Endothelial cell of umbilical vein (primary cell): ENCODE measurements at regions of chr10 and their contacts with region 1.

Region 1: GRCh38 chr10:78756604-78757349 is 312.0 kb upstream of the ZMIZ1 start:
- DNase-seq: peak; percentile 95
- H3K4me3 ChIP-seq: no peak overlapping the region
- H3K27ac ChIP-seq: peak overlapping the region; percentile 54
- H3K4me1 ChIP-seq: peaks cover 34% of the 10 kb centered on the region
- H3K27me3 ChIP-seq: peaks cover 0 to 6% of the 10 kb centered on the region in 2 experiments
- CTCF ChIP-seq: no peak
- POLR2A ChIP-seq: no peak

Region 2: GRCh38 chr10:78700413-78700812 is 56.4 kb before region 1 on chr10:
- CTCF ChIA-PET with region 1: no interaction called
- POLR2A ChIA-PET with region 1: no interaction called
- dilution Hi-C with region 1: no loop called
- intact Hi-C with region 1: loop called (anchors 2 kb)
- DNase-seq: peak; percentile 72
- H3K4me3 ChIP-seq: no peak overlapping the region
- H3K27ac ChIP-seq: no peak overlapping the region
- H3K4me1 ChIP-seq: peaks cover 17% of the 10 kb centered on the region
- H3K27me3 ChIP-seq: no peaks in the 10 kb centered on the region
- CTCF ChIP-seq: no peak
- POLR2A ChIP-seq: no peak

Region 3: DNA sequence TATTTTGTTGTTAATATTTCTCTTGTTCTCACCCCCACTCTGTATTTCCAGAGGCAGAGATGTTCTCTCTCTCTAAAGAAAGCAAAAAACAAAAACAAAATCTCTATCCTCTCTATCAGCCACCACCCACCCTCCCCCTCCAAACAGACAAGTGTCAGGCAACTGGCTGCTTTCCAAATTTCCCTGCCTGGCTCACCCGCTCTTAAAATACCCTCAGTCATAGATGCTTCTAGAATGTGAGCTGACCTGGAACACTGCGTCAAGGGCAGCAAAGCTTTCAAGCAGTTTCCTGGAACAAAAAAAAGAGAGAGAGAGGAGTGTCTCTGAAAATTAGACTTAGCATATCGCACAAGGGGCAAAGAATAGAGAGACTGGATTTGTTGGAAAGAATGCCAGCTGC is 29.0 kb before region 1 on chr10:
- CTCF ChIA-PET with region 1: no interaction called
- POLR2A ChIA-PET with region 1: no interaction called
- dilution Hi-C with region 1: no loop called
- intact Hi-C with region 1: no loop called
- DNase-seq: no peak
- H3K4me3 ChIP-seq: no peak overlapping the region
- H3K27ac ChIP-seq: no peak overlapping the region
- H3K4me1 ChIP-seq: no peaks in the 10 kb centered on the region
- H3K27me3 ChIP-seq: peaks cover 20 to 24% of the 10 kb centered on the region in 2 experiments
- CTCF ChIP-seq: no peak
- POLR2A ChIP-seq: no peak

Region 4: GRCh38 chr10:78742730-78743615 is 13.8 kb before region 1 on chr10:
- CTCF ChIA-PET with region 1: interaction called, 11 read pairs
- POLR2A ChIA-PET with region 1: no interaction called
- dilution Hi-C with region 1: no loop called
- intact Hi-C with region 1: no loop called
- DNase-seq: no peak
- H3K4me3 ChIP-seq: no peak overlapping the region
- H3K27ac ChIP-seq: no peak overlapping the region
- H3K4me1 ChIP-seq: no peaks in the 10 kb centered on the region
- H3K27me3 ChIP-seq: peaks cover 3 to 11% of the 10 kb centered on the region in 2 experiments
- CTCF ChIP-seq: no peak
- POLR2A ChIP-seq: no peak